ENCODE measurements at regions of chr15 and their contacts with region 1.

Region 1: GRCh38 chr15:64019764-64020163 is 26.5 kb downstream of the DAPK2 start:
- DNase-seq: peak in 4 of 5 donors; percentile 49 to 84 (median 66)
- ATAC-seq: peak; percentile 78 to 87 (median 86)
- H3K4me3 ChIP-seq: no peak overlapping the region
- H3K27ac ChIP-seq: peak overlapping the region; percentile 38 to 80 (median 68)
- H3K4me1 ChIP-seq: peaks cover 0 to 84% (median 24%) of the 10 kb centered on the region in 12 donors
- H3K27me3 ChIP-seq: no peaks in the 10 kb centered on the region
- CTCF ChIP-seq: no peak
- POLR2A ChIP-seq: no peak

Region 2: DNA sequence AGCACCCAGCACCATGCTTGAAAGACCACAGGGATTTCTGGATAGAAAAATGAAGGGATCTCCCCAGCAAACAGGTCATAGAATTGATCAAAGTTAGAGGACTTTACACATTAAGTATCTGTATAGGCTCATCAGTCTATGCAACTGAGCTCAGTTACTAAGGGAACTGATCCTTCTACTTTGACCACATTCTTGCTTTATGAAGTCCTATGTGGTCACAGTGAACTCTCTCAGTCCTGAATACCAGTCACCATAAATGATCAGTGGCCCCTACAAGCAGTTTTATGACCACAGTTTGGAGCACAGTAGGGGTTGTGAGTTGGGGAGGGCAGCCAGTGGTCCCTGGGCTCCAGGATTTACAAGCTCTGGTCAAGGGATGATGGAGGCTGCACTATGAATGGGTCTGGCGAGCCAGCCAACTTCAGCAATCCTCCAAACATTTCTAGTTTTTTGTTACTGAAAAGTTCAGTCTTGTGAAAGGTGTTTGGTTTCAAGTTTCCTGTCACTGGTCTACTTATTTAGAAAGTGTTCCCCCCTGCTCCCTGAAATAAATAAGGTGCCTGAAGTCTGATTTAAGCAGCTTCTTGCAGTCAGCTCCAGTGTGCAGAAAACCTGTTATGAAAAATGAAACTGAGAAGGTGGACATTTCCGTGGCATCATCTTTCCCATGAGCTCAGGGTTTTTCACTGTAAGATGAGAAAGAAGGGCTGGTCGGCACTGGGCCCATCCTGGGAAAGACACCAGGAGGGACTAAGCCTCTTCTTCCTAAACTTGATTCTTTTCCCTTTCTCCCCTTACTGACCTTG is 48.9 kb before region 1 on chr15:
- intact Hi-C with region 1: loop called in 2 of 10 experiments (anchors 5 to 10 kb)
- DNase-seq: no peak
- ATAC-seq: no peak
- H3K4me3 ChIP-seq: no peak overlapping the region
- H3K27ac ChIP-seq: peak overlapping the region; percentile 22 to 89 (median 77)
- H3K4me1 ChIP-seq: peaks cover 3 to 69% (median 38%) of the 10 kb centered on the region in 12 donors
- H3K27me3 ChIP-seq: no peaks in the 10 kb centered on the region
- CTCF ChIP-seq: no peak
- POLR2A ChIP-seq: no peak

Region 3: DNA sequence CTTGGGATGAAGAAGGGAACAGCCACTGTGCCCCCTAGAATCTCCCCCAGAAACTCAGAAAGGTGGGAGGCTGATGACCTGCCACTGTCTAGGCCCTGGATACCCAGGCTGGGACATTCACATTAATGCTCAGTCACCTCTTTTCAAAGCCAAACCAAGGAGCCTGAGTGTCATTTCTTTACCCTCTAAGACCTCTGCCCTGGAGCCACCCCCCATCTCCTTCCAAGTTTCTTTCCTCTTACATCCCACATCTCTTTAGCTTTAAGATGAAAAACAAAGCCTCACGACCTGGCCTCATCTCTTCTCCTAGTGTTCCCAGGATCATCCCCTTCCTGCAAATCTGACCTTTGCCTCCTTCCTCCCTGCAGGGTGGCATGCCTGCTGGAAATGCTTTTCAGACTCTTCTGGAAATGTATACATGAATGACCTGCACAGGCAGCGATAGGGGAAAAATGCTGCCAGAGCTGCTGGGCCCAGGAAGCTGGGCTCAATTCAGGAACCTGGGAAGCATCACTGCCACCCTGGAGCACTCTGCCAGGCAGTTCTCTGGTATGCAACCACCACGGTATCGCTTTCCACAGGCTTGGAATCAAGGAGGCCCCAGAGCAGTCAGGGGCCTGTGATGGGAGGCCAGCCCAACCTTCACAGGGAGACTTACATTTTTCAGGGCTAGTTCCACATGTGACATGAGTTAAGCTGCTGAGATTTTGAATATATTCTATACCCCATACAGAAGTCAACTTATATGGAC is 41.1 kb before region 1 on chr15:
- intact Hi-C with region 1: loop called in 3 of 10 experiments (anchors 5 to 10 kb)
- DNase-seq: peak in 4 of 5 donors; percentile 74 to 83 (median 80)
- ATAC-seq: peak; percentile 89 to 94 (median 92)
- H3K4me3 ChIP-seq: no peak overlapping the region
- H3K27ac ChIP-seq: peak overlapping the region; percentile 30 to 94 (median 84)
- H3K4me1 ChIP-seq: peaks cover 0 to 55% (median 26%) of the 10 kb centered on the region in 12 donors
- H3K27me3 ChIP-seq: no peaks in the 10 kb centered on the region
- CTCF ChIP-seq: no peak
- POLR2A ChIP-seq: no peak

Region 4: GRCh38 chr15:63986751-63987341 is 32.9 kb before region 1 on chr15:
- intact Hi-C with region 1: loop called in 2 of 10 experiments (anchors 5 kb)
- DNase-seq: no peak
- ATAC-seq: no peak
- H3K4me3 ChIP-seq: no peak overlapping the region
- H3K27ac ChIP-seq: peak overlapping the region; percentile 73 to 97 (median 87)
- H3K4me1 ChIP-seq: peaks cover 11 to 81% (median 67%) of the 10 kb centered on the region in 12 donors
- H3K27me3 ChIP-seq: no peaks in the 10 kb centered on the region
- CTCF ChIP-seq: no peak
- POLR2A ChIP-seq: no peak

Measured in heart left ventricle (tissue), 16 donors.